ENCODE measurements at regions of chr12 and their contacts with region 1.

Region 1: DNA sequence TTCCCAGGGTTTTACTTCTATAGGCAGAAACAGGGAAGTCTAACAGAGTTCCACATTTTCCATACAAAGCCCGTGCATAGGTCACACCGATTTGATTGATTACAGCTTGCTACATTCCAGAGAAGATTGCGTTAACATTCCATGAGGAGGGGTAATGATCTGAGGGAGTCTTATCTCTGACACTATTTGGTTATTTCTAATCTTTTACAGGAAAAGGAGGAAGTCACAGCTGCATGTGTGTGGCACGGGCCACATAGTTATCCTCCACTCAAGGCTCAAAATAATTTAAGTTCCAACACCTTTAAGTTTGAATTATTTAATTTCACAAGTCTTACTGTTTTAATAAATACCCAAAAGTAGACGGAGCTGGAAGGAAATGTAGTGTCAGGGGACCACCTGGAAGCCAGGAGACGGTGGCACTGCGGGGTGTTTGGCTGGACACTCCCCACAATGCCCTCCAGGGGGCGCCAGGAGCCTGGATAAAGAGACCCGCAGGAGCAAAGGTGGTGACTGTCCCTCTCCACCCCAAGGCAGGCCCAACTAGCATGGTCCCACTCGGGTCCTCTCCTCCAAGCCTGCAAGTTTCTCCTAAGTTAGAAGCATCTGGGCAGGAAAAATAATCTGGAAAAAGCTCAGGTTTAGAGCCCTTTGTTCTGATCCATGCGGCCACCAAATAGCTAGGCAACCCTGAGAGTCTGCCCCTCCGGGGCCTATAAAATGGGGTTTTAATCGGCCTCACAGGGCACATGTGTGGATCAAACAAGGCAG is 20.2 kb downstream of the KRT8 start:
- DNase-seq: peak in 1 of 2 experiments; percentile 98
- H3K4me3 ChIP-seq: no peak overlapping the region
- H3K27ac ChIP-seq: no peak overlapping the region
- H3K4me1 ChIP-seq: no peaks in the 10 kb centered on the region
- H3K27me3 ChIP-seq: no peaks in the 10 kb centered on the region; a peak in 1 of 7 replicates
- CTCF ChIP-seq: peak; percentile 83 to 98 (median 88)
- EP300 ChIP-seq: no peak
- POLR2A ChIP-seq: no peak
- RAD21 ChIP-seq: peak; percentile 99

Region 2: DNA sequence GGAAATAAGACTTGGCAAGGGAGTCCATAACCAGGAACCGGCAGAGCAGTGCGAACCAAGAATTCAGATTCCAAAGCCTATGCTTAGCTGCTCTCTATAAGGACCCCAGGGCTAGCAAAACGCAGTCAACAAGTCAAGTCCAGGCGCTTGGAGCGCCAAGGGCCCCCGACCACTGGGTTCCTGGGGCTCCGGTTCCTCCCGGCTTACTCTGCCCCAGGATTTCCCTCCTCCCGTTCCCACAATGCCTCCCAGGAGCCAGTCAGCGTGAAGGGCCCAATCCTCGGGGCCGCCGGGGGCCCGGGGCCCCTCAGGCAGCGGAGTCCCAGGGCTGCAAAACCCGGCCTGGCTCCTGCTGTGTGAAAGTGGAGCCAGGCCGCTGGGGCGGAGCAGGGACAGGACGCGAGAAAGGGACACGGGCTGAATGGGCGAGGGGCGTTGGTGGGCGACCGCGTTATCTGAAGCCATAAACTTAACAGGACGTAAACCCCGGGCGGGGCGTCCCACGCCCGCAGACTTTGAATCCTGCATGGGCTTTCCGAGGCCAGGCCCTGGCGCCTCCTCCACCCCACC is 18.7 kb after region 1 on chr12:
- CTCF ChIA-PET with region 1: interaction called, 351 read pairs
- POLR2A ChIA-PET with region 1: interaction called, 21 read pairs
- DNase-seq: peak; percentile 61 to 91
- H3K4me3 ChIP-seq: peak overlapping the region; percentile 59 to 100 (median 76)
- H3K27ac ChIP-seq: no peak overlapping the region
- H3K4me1 ChIP-seq: peaks cover 14 to 21% (median 15%) of the 10 kb centered on the region in 4 experiments
- H3K27me3 ChIP-seq: no peaks in the 10 kb centered on the region; a peak in 1 of 7 replicates
- CTCF ChIP-seq: no peak
- EP300 ChIP-seq: peak in 1 of 2 experiments; percentile 53; a peak in 1 of 3 replicates
- POLR2A ChIP-seq: no peak; a peak in 1 of 3 replicates
- RAD21 ChIP-seq: peak in 1 of 2 experiments; percentile 5; a peak in 1 of 4 replicates

Region 3: DNA sequence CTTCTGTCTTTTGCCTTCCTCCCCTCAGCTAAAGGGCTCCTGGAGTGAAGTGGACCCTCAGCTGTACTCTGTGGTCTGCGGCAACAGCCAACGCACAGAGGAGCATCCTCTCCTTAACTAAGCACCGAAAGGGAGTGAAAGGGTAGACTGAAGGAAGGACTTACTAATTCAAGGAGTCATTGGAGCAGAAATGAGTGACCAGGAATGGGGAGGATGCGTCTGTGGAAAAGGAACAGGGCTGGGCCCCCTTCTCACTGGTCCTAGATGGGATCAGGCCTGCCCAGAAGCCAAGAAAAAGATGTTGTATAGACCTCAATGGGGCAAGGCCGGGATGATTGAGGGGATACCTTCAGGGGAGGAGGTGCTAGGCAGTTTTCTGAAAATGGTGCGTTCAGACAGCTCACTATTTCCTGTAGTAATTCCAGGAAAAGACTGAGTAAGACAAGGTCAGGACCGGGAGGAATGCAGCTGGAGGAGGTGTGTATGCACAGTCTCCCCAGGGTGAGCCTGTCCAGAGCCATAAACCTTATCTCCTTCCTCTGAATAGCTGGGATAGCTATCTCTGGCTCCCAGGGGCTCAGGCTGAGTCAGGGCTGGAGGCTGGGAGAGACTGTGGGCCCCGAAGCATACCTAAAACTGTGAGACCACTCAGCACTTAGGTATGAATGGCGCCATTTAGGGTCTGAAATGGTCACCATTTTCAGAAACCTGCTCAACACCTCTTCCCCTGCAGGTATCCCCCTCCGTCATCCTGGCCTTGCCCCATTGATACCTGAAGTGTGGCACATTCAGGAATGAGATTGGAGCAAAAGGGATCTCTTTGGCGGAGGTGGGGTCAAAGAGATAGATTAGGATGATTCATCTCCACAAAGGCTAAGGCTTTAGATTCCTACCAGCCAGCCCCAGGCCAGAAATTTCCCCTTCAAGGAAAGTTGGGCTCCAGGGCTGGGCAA is 40.3 kb after region 1 on chr12:
- CTCF ChIA-PET with region 1: interaction called, 43 read pairs
- POLR2A ChIA-PET with region 1: interaction called, 3 read pairs
- DNase-seq: no peak
- H3K4me3 ChIP-seq: no peak overlapping the region
- H3K27ac ChIP-seq: no peak overlapping the region
- H3K4me1 ChIP-seq: peaks cover 0 to 24% (median 9%) of the 10 kb centered on the region in 4 experiments; a peak in 6 of 7 replicates
- H3K27me3 ChIP-seq: no peaks in the 10 kb centered on the region
- CTCF ChIP-seq: no peak
- EP300 ChIP-seq: no peak
- POLR2A ChIP-seq: no peak
- RAD21 ChIP-seq: no peak

Region 4: GRCh38 chr12:52949413-52950331 is 65.0 kb after region 1 on chr12:
- CTCF ChIA-PET with region 1: interaction called, 35 read pairs
- POLR2A ChIA-PET with region 1: interaction called, 12 read pairs
- DNase-seq: peak in 1 of 2 experiments; percentile 62
- H3K4me3 ChIP-seq: peak overlapping the region; percentile 88 to 98 (median 93)
- H3K27ac ChIP-seq: peak overlapping the region; percentile 83
- H3K4me1 ChIP-seq: peaks cover 18 to 38% (median 29%) of the 10 kb centered on the region in 4 experiments
- H3K27me3 ChIP-seq: no peaks in the 10 kb centered on the region
- CTCF ChIP-seq: no peak
- EP300 ChIP-seq: no peak
- POLR2A ChIP-seq: peak; percentile 73 to 85
- RAD21 ChIP-seq: peak in 1 of 2 experiments; percentile 3; a peak in 1 of 4 replicates

Region 5: GRCh38 chr12:52969828-52970569 is 85.3 kb after region 1 on chr12:
- CTCF ChIA-PET with region 1: interaction called, 63 read pairs
- POLR2A ChIA-PET with region 1: interaction called, 5 read pairs
- DNase-seq: no peak
- H3K4me3 ChIP-seq: no peak overlapping the region
- H3K27ac ChIP-seq: no peak overlapping the region
- H3K4me1 ChIP-seq: peaks cover 4 to 10% (median 7%) of the 10 kb centered on the region in 4 experiments
- H3K27me3 ChIP-seq: peaks cover 0 to 9% (median 5%) of the 10 kb centered on the region in 4 experiments; a peak in 3 of 7 replicates
- CTCF ChIP-seq: no peak
- EP300 ChIP-seq: no peak
- POLR2A ChIP-seq: no peak
- RAD21 ChIP-seq: no peak

Region 6: GRCh38 chr12:53054112-53054833 is 169.6 kb after region 1 on chr12:
- CTCF ChIA-PET with region 1: interaction called, 14 read pairs
- POLR2A ChIA-PET with region 1: no interaction called
- DNase-seq: peak; percentile 87 to 97
- H3K4me3 ChIP-seq: peak overlapping the region; percentile 82 to 86 (median 84)
- H3K27ac ChIP-seq: peak overlapping the region; percentile 75; the same call in 1 of the 2 replicates
- H3K4me1 ChIP-seq: peaks cover 4 to 30% (median 23%) of the 10 kb centered on the region in 4 experiments
- H3K27me3 ChIP-seq: peaks cover 0 to 12% (median 3%) of the 10 kb centered on the region in 4 experiments; a peak in 4 of 7 replicates
- CTCF ChIP-seq: no peak
- EP300 ChIP-seq: no peak
- POLR2A ChIP-seq: peak in 1 of 2 experiments; percentile 86; a peak in 2 of 3 replicates
- RAD21 ChIP-seq: no peak

Measured in H1 (cell line).